ENCODE measurements at regions of chr13 and their contacts with region 1.

Region 1: GRCh38 chr13:23466144-23467002 is 32.9 kb upstream of the SACS start:
- DNase-seq: peak; percentile 73
- H3K4me3 Mint-ChIP-seq: peak overlapping the region; percentile 73
- H3K27ac Mint-ChIP-seq: peak overlapping the region; percentile 31
- H3K4me1 Mint-ChIP-seq: peaks cover 5% of the 10 kb centered on the region
- H3K27me3 Mint-ChIP-seq: peaks cover 18% of the 10 kb centered on the region
- CTCF ChIP-seq: peak; percentile 53

Region 2: DNA sequence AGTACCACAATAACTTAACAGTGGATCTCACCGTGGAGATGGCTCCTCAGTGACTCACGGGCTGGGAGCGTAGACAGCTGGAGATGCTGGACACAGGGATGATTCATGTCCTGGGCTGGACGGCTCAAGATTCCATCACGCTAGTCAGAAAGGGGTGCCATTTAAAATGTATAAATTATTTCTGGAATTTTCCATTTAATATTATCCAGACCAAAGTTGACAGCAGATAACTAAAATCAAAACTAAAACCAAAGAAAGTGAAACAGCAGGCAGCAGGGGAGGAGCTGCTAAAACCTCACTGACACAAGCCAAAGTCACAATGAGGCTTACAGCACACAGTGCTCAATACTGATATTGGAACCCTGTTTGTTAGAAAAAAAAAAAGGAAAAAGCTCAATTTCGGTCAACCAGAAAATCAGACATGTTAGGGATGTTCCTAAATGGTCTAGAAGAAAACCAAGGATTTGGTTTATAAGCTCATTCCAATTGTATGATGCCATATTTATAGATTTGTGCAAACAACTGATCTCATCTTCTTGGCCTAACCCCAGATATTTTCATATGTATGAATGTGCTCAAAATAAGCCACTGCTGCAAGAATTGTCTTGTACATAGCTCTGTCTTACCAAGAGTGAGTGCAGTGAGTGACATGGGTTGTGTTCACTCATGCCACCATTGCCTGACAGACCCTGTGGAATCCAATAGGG is 144.7 kb before region 1 on chr13:
- CTCF ChIA-PET with region 1: no interaction called
- POLR2A ChIA-PET with region 1: no interaction called
- intact Hi-C with region 1: loop called (anchors 5 kb)
- DNase-seq: peak; percentile 83
- H3K4me3 Mint-ChIP-seq: peak overlapping the region; percentile 57
- H3K27ac Mint-ChIP-seq: peak overlapping the region; percentile 88
- H3K4me1 Mint-ChIP-seq: peaks cover 21% of the 10 kb centered on the region
- H3K27me3 Mint-ChIP-seq: no peaks in the 10 kb centered on the region
- CTCF ChIP-seq: no peak

Region 3: GRCh38 chr13:23579072-23579895 is 112.9 kb after region 1 on chr13:
- CTCF ChIA-PET with region 1: interaction called, 3 read pairs
- POLR2A ChIA-PET with region 1: no interaction called
- intact Hi-C with region 1: loop called (anchors 5 kb)
- DNase-seq: peak; percentile 79
- H3K4me3 Mint-ChIP-seq: peak overlapping the region; percentile 69
- H3K27ac Mint-ChIP-seq: no peak overlapping the region
- H3K4me1 Mint-ChIP-seq: peaks cover 6% of the 10 kb centered on the region
- H3K27me3 Mint-ChIP-seq: peaks cover 47% of the 10 kb centered on the region
- CTCF ChIP-seq: no peak

Region 4: GRCh38 chr13:23871616-23872220 is 405.3 kb after region 1 on chr13:
- CTCF ChIA-PET with region 1: interaction called, 12 read pairs
- POLR2A ChIA-PET with region 1: interaction called, 7 read pairs
- intact Hi-C with region 1: loop called (anchors 1 kb)
- DNase-seq: peak; percentile 56
- H3K4me3 Mint-ChIP-seq: no peak overlapping the region
- H3K27ac Mint-ChIP-seq: no peak overlapping the region
- H3K4me1 Mint-ChIP-seq: no peaks in the 10 kb centered on the region
- H3K27me3 Mint-ChIP-seq: no peaks in the 10 kb centered on the region
- CTCF ChIP-seq: peak; percentile 43

Region 5: DNA sequence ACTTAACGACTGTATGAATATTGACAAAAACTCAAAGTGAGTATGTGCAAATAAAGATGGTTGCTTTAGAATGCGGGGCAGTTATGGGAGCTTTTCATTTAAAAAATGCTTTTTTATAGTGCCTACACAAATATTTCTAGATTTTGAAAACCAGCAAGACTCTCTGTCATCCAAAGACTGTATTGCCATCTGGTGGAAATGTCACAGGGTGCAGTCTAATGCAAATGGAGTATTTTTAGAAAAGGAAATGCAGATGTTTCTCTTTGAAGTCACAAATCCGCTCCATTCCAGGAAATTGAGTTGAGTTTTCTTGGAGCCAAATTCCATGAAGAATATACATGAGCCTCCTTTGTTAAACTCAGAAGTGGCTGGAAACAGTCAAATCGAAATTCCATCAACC is 433.2 kb after region 1 on chr13:
- CTCF ChIA-PET with region 1: interaction called, 21 read pairs
- POLR2A ChIA-PET with region 1: interaction called, 4 read pairs
- intact Hi-C with region 1: loop called (anchors 1 kb)
- DNase-seq: peak; percentile 52
- H3K4me3 Mint-ChIP-seq: no peak overlapping the region
- H3K27ac Mint-ChIP-seq: no peak overlapping the region
- H3K4me1 Mint-ChIP-seq: no peaks in the 10 kb centered on the region
- H3K27me3 Mint-ChIP-seq: peaks cover 8% of the 10 kb centered on the region
- CTCF ChIP-seq: peak; percentile 47